ENCODE measurements at regions of chr2 and their contacts with region 1.

Region 1: GRCh38 chr2:64831134-64831976 is 157.8 kb upstream of the SLC1A4 start:
- DNase-seq: peak; percentile 89
- ATAC-seq: peak; percentile 93
- H3K4me3 Mint-ChIP-seq: no peak overlapping the region
- H3K27ac Mint-ChIP-seq: no peak overlapping the region
- H3K4me1 Mint-ChIP-seq: 0 out of 2 replicates have a peak, but pooled peaks cover 6% of the 10 kb centered on the region
- H3K27me3 Mint-ChIP-seq: peaks cover 4% of the 10 kb centered on the region; the same call in 1 of the 2 replicates
- CTCF ChIP-seq: peak; percentile 85

Region 2: DNA sequence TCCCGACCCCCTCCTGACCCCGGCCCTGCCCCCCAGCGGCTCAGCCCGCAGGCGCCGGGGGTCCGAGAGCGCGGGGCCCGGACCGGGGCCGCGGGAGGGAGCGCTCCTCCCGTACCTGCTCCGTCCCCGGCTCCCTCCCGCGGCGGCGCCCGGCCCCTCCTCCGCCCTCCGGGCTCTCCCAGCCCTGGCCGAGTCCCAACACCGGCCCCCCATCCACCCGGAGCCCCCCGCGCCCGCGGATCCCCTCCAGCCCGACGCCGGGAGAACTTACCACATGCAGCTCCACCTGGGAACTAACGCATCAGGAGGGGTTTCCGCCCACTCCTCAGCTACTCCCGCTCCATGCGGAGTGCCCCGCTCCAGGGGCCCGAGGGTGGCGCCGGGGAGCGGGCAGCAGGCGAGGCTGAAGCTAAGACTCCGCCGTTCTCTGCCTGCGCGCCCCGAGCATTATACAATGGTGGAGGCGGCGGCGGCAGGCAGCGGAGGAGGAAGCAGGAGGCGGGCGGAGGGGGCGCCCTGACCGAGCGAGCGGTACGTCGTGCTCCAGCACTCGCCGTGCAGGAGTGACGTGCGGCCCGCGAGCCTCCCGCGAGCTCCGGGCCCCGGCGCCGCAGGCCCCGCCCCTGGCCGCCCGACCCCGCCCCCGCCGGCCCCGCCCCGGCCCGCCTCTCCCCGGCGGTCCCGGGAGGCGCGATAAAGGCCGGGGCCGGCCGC is 177.8 kb before region 1 on chr2 and contains the start of gene SERTAD2:
- CTCF ChIA-PET with region 1: interaction called, 29 read pairs
- POLR2A ChIA-PET with region 1: no interaction called
- DNase-seq: peak; percentile 82
- ATAC-seq: peak; percentile 85
- H3K4me3 Mint-ChIP-seq: peak within 1 kb of the TSS; percentile 78
- H3K27ac Mint-ChIP-seq: peak within 1 kb of the TSS; percentile 73
- H3K4me1 Mint-ChIP-seq: peaks cover 48% of the 10 kb centered on the region
- H3K27me3 Mint-ChIP-seq: peaks cover 35% of the 10 kb centered on the region
- CTCF ChIP-seq: no peak
- total RNA-seq, gene SERTAD2: 7.9 to 8.0 TPM (median 7.9 TPM) in 3 replicates

Region 3: GRCh38 chr2:64695721-64696261 is 135.6 kb before region 1 on chr2:
- CTCF ChIA-PET with region 1: no interaction called
- POLR2A ChIA-PET with region 1: no interaction called
- DNase-seq: no peak
- ATAC-seq: no peak; the same call in 1 of the 2 replicates
- H3K4me3 Mint-ChIP-seq: no peak overlapping the region
- H3K27ac Mint-ChIP-seq: no peak overlapping the region
- H3K4me1 Mint-ChIP-seq: peaks cover 14% of the 10 kb centered on the region
- H3K27me3 Mint-ChIP-seq: no peaks in the 10 kb centered on the region
- CTCF ChIP-seq: no peak

Region 4: GRCh38 chr2:64750817-64751285 is 80.5 kb before region 1 on chr2:
- CTCF ChIA-PET with region 1: interaction called, 22 read pairs
- POLR2A ChIA-PET with region 1: no interaction called
- DNase-seq: peak; percentile 97
- ATAC-seq: peak; percentile 94
- H3K4me3 Mint-ChIP-seq: peak overlapping the region; percentile 96
- H3K27ac Mint-ChIP-seq: peak overlapping the region; percentile 97
- H3K4me1 Mint-ChIP-seq: peaks cover 15% of the 10 kb centered on the region
- H3K27me3 Mint-ChIP-seq: peaks cover 23% of the 10 kb centered on the region
- CTCF ChIP-seq: no peak

Region 5: DNA sequence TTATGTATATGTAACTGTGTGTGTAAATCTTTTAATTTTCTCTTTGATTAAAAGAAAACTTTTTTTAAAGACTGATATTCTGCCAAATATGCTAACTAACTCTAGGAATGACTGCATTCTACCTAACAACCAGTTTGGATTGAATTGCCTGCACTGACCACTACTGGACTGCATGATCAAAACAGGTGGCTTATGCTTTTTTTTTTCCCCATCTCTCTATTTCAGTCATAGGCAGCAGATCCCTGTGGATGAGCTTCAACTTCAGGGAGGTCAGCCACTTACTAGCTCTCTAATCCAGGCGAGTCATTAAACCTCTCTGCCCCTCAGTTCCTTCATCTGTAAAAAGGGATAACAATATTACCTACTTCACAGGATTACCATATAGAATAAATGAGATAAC is 39.0 kb before region 1 on chr2:
- CTCF ChIA-PET with region 1: interaction called, 11 read pairs
- POLR2A ChIA-PET with region 1: no interaction called
- DNase-seq: no peak
- ATAC-seq: no peak
- H3K4me3 Mint-ChIP-seq: no peak overlapping the region
- H3K27ac Mint-ChIP-seq: no peak overlapping the region
- H3K4me1 Mint-ChIP-seq: peaks cover 11% of the 10 kb centered on the region
- H3K27me3 Mint-ChIP-seq: no peaks in the 10 kb centered on the region
- CTCF ChIP-seq: no peak

Region 6: GRCh38 chr2:64819774-64820696 is 11.3 kb before region 1 on chr2:
- CTCF ChIA-PET with region 1: interaction called, 12 read pairs
- POLR2A ChIA-PET with region 1: no interaction called
- DNase-seq: no peak
- ATAC-seq: no peak
- H3K4me3 Mint-ChIP-seq: no peak overlapping the region
- H3K27ac Mint-ChIP-seq: no peak overlapping the region
- H3K4me1 Mint-ChIP-seq: peaks cover 26% of the 10 kb centered on the region
- H3K27me3 Mint-ChIP-seq: peaks cover 4% of the 10 kb centered on the region
- CTCF ChIP-seq: no peak

Region 7: DNA sequence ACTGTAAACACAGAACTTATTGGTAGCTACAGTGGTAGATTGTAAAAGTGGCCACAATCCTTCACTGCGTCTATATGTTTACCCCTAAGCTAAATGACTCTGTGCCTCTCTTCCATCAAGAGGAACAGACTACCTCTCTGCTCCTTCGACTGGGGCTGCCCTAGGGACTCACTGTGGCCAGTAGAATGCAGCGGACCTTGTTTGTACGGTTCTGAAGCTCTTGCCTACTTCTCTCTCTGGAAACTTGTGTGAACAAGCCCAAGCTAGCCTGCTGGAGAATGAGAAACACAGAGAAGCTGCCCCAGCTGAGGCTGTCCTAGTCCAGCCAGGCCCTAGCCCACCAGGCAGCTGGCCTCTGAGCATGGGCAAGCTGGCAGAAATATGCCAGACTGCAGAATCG is 17.0 kb after region 1 on chr2:
- CTCF ChIA-PET with region 1: interaction called, 14 read pairs
- POLR2A ChIA-PET with region 1: no interaction called
- DNase-seq: no peak
- ATAC-seq: no peak
- H3K4me3 Mint-ChIP-seq: no peak overlapping the region
- H3K27ac Mint-ChIP-seq: no peak overlapping the region
- H3K4me1 Mint-ChIP-seq: peaks cover 10% of the 10 kb centered on the region
- H3K27me3 Mint-ChIP-seq: no peaks in the 10 kb centered on the region; the same call in none of the 2 replicates
- CTCF ChIP-seq: no peak

Region 8: GRCh38 chr2:64859312-64860212 is 28.2 kb after region 1 on chr2:
- CTCF ChIA-PET with region 1: interaction called, 18 read pairs
- POLR2A ChIA-PET with region 1: no interaction called
- DNase-seq: peak; percentile 72
- ATAC-seq: peak; percentile 71
- H3K4me3 Mint-ChIP-seq: peak overlapping the region; percentile 72
- H3K27ac Mint-ChIP-seq: no peak overlapping the region
- H3K4me1 Mint-ChIP-seq: peaks cover 20% of the 10 kb centered on the region
- H3K27me3 Mint-ChIP-seq: peaks cover 27% of the 10 kb centered on the region
- CTCF ChIP-seq: no peak

Region 9: GRCh38 chr2:64972876-64973275 is 141.5 kb after region 1 on chr2:
- CTCF ChIA-PET with region 1: no interaction called
- POLR2A ChIA-PET with region 1: no interaction called
- DNase-seq: no peak
- ATAC-seq: no peak
- H3K4me3 Mint-ChIP-seq: no peak overlapping the region
- H3K27ac Mint-ChIP-seq: no peak overlapping the region
- H3K4me1 Mint-ChIP-seq: peaks cover 15% of the 10 kb centered on the region
- H3K27me3 Mint-ChIP-seq: no peaks in the 10 kb centered on the region
- CTCF ChIP-seq: no peak

Measured in WTC11 (cell line).